ENCODE measurements at regions of chr11 and their contacts with region 1.

Region 1: DNA sequence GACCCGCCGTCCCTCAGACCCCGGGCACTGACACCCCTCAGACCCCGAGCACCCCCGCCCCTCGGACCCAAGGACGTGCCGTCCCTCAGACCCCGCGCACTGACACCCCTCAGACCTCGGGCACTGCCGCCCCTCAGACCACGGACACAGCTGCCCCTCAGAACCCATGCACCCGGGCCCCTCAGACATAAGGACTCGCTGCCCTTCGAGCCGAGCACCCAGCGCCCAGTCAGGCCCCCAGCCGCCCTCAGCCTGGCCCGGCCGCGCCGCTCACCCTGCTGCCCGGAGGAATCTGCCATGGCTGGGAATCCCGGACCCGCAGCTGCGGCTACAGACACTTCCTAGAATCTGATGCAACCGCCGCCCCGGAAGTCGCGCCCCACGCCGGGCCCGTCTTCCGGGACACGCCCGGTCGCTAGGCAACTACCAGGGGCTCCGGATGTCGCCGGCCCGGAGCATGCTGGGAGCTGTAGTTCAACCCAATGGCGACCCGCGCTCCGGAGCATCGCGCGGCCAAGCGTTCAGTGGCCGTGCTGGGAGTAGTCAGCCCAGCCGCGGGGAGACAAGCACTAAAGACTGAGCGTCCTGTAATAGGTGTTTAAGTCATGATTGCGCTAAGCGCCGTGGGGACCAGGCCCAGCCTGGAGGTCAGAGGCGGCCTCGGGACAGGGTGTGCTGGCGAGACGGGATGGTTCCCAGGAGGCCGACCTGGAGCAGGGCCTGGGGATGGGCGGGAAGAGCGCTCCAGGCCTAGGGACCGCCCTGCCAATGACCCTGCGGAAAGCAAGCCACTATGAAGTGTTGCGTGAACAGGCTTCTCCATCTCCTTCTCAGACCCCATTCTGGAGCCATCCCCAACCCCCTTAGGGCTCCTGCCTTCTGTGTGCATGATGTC is at the start of gene CARS1:
- DNase-seq: peak; percentile 82 to 97 (median 91)
- ATAC-seq: peak; percentile 99
- H3K4me3 ChIP-seq: peak within 1 kb of the TSS; percentile 83
- H3K4me3 Mint-ChIP-seq: peak within 1 kb of the TSS; percentile 91
- H3K27ac ChIP-seq: peak within 1 kb of the TSS; percentile 63 to 73
- H3K27ac Mint-ChIP-seq: peak within 1 kb of the TSS; percentile 75
- H3K4me1 ChIP-seq: peaks cover 48% of the 10 kb centered on the region
- H3K4me1 Mint-ChIP-seq: peaks cover 37% of the 10 kb centered on the region
- H3K27me3 ChIP-seq: no peaks in the 10 kb centered on the region
- H3K27me3 Mint-ChIP-seq: no peaks in the 10 kb centered on the region
- CTCF ChIP-seq: no peak
- total RNA-seq, gene CARS1: 24.1 to 25.2 TPM

Region 2: DNA sequence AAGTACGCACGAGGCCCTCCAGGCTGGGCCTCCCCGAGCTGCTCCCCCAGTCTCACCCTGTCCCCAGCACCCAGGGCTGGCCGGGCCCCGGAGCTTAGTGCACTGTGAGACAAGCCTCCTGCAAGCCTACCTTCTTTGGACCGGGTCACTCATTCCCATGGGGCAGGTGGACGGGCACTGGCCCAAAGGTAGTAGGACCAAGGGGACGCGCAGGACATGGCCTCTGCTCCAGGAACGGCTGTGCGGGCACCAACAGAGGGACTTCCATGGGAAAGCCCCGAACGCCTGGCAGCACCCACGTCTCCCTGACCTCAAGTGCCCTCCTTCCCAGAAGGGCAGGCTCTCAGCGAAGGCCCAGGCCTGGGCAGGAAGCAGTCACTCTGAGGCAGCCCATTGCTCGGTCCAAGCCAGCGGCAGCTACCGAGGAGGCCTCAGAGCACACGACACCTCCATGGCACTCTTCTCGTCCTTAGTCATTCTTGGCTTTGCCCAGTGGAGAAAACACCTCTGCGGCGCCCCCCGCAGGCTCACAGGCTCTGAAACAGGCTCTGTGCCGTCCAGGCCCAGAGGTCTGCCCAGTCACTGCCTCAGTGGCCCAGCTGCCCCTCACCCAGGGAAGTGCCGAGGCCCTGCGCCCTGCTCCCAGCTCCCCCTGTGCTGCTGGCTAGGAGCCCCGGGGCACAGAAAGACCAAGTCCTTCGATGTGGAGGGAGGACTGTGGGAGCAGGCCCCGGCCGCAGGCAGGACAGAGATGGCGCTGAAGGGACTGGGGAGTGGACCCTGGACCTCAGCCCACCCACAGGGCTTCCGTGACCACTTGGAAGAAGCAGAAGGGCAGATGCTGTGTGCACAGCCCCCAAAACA is 1574.5 kb before region 1 on chr11:
- CTCF ChIA-PET with region 1: no interaction called
- POLR2A ChIA-PET with region 1: no interaction called
- intact Hi-C with region 1: no loop called
- DNase-seq: no peak
- ATAC-seq: no peak
- H3K4me3 ChIP-seq: no peak overlapping the region
- H3K4me3 Mint-ChIP-seq: no peak overlapping the region
- H3K27ac ChIP-seq: no peak overlapping the region
- H3K27ac Mint-ChIP-seq: no peak overlapping the region
- H3K4me1 ChIP-seq: peaks cover 29% of the 10 kb centered on the region
- H3K4me1 Mint-ChIP-seq: peaks cover 5% of the 10 kb centered on the region
- H3K27me3 ChIP-seq: no peaks in the 10 kb centered on the region
- H3K27me3 Mint-ChIP-seq: no peaks in the 10 kb centered on the region
- CTCF ChIP-seq: no peak

Region 3: GRCh38 chr11:2901854-2902783 is 155.2 kb before region 1 on chr11:
- CTCF ChIA-PET with region 1: no interaction called
- POLR2A ChIA-PET with region 1: no interaction called
- intact Hi-C with region 1: loop called in 1 of 2 experiments (anchors 2 kb)
- DNase-seq: peak; percentile 71 to 96 (median 87)
- ATAC-seq: peak; percentile 83
- H3K4me3 ChIP-seq: peak overlapping the region; percentile 69
- H3K4me3 Mint-ChIP-seq: peak overlapping the region; percentile 86
- H3K27ac ChIP-seq: peak overlapping the region; percentile 18 to 50
- H3K27ac Mint-ChIP-seq: peak overlapping the region; percentile 44
- H3K4me1 ChIP-seq: peaks cover 54% of the 10 kb centered on the region
- H3K4me1 Mint-ChIP-seq: peaks cover 49% of the 10 kb centered on the region
- H3K27me3 ChIP-seq: no peaks in the 10 kb centered on the region
- H3K27me3 Mint-ChIP-seq: no peaks in the 10 kb centered on the region
- CTCF ChIP-seq: no peak

Region 4: DNA sequence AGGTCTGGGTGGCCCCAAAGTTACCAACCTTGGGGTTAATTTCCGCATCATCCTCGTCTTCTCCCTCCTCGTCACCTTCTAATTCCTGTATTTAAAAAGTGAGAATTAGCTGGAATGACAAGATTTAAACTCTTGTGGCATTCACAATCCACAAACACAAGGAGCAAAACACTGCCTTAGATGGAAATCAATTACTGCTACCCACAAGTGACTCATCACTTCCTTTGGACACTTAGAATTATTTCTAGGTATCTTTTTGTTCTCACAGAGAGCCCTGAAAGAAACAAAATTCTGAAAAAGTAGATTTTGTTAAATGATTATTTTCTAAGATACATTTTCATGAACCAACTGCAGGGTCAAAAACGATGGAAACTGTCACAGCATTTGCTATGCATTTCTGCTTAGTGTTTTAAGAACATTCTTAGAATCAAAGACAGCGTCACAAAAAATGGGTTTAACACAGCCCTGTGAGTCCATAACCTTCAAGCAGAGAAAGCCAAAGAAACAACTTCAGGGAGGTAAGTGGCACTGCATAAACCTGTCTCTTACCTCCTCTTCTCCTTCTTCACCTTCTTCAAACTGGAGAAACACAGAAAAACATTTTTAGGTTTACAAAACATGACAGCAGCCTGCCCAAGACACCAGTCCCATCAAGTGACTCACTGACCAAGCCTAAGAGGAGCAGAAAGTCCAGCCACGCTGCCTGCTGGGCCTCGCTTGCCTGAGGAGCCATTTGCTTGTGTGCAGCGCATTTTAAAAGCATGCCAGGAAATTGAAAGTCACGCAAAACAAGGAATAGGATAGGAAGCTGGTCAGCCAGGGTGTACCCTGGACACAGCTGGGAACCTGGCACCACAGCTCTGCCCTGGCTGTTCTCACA is 105.8 kb before region 1 on chr11:
- CTCF ChIA-PET with region 1: no interaction called
- POLR2A ChIA-PET with region 1: no interaction called
- intact Hi-C with region 1: no loop called
- DNase-seq: no peak
- ATAC-seq: no peak
- H3K4me3 ChIP-seq: no peak overlapping the region
- H3K4me3 Mint-ChIP-seq: no peak overlapping the region
- H3K27ac ChIP-seq: no peak overlapping the region
- H3K27ac Mint-ChIP-seq: no peak overlapping the region
- H3K4me1 ChIP-seq: peaks cover 24% of the 10 kb centered on the region
- H3K4me1 Mint-ChIP-seq: peaks cover 43% of the 10 kb centered on the region
- H3K27me3 ChIP-seq: no peaks in the 10 kb centered on the region
- H3K27me3 Mint-ChIP-seq: no peaks in the 10 kb centered on the region
- CTCF ChIP-seq: no peak

Region 5: GRCh38 chr11:3378426-3379423 is 321.4 kb after region 1 on chr11 and contains the start of gene ZNF195:
- CTCF ChIA-PET with region 1: no interaction called
- POLR2A ChIA-PET with region 1: no interaction called
- intact Hi-C with region 1: loop called in 1 of 2 experiments (anchors 10 kb)
- DNase-seq: peak; percentile 92 to 98 (median 96)
- ATAC-seq: peak; percentile 100
- H3K4me3 ChIP-seq: peak within 1 kb of the TSS; percentile 89
- H3K4me3 Mint-ChIP-seq: peak within 1 kb of the TSS; percentile 100
- H3K27ac ChIP-seq: peak within 1 kb of the TSS; percentile 68 to 77
- H3K27ac Mint-ChIP-seq: peak within 1 kb of the TSS; percentile 96
- H3K4me1 ChIP-seq: peaks cover 30% of the 10 kb centered on the region
- H3K4me1 Mint-ChIP-seq: peaks cover 54% of the 10 kb centered on the region
- H3K27me3 ChIP-seq: no peaks in the 10 kb centered on the region
- H3K27me3 Mint-ChIP-seq: no peaks in the 10 kb centered on the region
- CTCF ChIP-seq: no peak
- total RNA-seq, gene ZNF195: 16.6 to 18.4 TPM

Measured in CD4-positive, alpha-beta T cell (primary cell).